ENCODE measurements at regions of chr4 and their contacts with region 1.

Region 1: GRCh38 chr4:109113521-109113920 is 188.9 kb downstream of the COL25A1 start:
- DNase-seq: no peak
- H3K4me3 ChIP-seq: no peak overlapping the region
- H3K27ac ChIP-seq: no peak overlapping the region
- H3K4me1 ChIP-seq: no peaks in the 10 kb centered on the region
- H3K27me3 ChIP-seq: no peaks in the 10 kb centered on the region
- CTCF ChIP-seq: no peak
- POLR2A ChIP-seq: no peak

Region 2: DNA sequence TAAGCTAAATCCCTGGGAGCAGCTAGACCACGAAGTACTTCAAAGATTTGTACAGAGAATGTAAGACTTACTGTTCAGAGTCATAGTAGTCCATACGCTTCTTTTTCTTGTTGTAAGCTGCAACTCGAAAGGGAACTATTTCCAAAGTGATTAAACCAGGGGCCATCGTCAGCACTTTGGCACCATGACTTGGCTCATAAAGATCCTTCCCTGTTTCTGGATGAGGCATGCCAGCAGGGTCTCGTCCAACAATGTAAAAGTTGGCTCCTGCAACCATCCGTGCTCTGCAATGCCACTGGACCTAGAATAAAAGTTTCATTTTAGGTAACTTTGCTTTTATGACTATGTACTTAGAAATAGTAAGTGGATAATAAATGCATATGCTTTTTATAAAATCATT is 1482.0 kb before region 1 on chr4:
- intact Hi-C with region 1: no loop called
- DNase-seq: no peak
- H3K4me3 ChIP-seq: no peak overlapping the region
- H3K27ac ChIP-seq: peak overlapping the region in 1 of 2 donors; percentile 16
- H3K4me1 ChIP-seq: no peaks in the 10 kb centered on the region
- H3K27me3 ChIP-seq: no peaks in the 10 kb centered on the region
- CTCF ChIP-seq: no peak
- POLR2A ChIP-seq: no peak

Region 3: DNA sequence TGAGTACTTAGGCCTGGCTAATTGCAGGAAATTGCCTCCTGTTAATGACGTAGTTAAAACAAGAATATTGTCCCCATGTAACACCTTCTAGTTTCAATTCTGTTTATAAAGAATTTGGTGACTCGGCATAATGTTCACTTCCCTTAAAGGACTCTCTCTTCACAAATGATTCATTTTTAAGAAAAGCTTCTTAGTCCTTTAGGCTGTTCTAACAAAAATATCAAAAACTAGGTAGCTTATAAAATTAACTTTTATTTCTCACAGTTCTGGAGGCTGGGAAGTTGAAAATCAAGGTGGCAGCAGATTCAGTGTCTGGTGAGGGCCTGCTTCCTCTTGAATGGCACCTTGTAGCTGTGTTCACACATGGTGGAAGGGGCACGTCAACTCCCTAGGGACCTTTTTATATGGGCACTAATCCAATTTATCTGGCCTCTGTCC is 165.1 kb after region 1 on chr4:
- intact Hi-C with region 1: loop called (anchors 5 kb)
- DNase-seq: no peak
- H3K4me3 ChIP-seq: no peak overlapping the region
- H3K27ac ChIP-seq: no peak overlapping the region
- H3K4me1 ChIP-seq: no peaks in the 10 kb centered on the region
- H3K27me3 ChIP-seq: no peaks in the 10 kb centered on the region
- CTCF ChIP-seq: no peak
- POLR2A ChIP-seq: no peak